B cell (primary cell): ENCODE measurements at regions of chrX and their contacts with region 1.

Region 1: DNA sequence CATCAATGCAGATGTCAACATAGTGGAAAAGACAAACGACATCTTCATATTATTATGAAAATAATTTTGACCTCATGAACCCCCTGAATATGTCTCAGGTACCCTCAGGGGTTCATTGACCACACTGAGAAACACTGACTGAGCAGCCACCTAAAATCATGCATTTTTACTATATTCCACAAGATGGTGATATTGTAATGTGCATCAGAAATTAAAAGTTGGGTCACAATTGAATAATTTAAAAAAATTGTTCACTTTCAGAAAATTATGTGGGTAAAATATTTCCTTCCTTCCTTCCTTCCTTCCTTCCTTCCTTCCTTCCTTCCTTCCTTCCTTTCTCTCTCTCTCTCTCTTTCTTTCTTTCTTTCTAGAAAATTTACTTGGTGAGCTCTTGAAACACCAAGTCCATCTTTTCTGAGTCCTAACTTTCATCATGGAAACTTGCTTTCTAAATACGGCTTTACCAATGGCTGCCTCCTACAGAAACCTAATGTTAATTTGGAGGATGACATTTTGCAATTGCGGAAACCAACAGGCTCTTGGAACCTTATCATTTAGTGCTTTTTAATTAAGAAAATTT is 103.6 kb downstream of the RTL3 start:
- DNase-seq: peak; percentile 44
- ATAC-seq: no peak
- H3K4me3 ChIP-seq: no peak overlapping the region
- H3K4me3 Mint-ChIP-seq: no peak overlapping the region
- H3K27ac ChIP-seq: no peak overlapping the region
- H3K27ac Mint-ChIP-seq: no peak overlapping the region
- H3K4me1 ChIP-seq: no peaks in the 10 kb centered on the region
- H3K4me1 Mint-ChIP-seq: peaks cover 17% of the 10 kb centered on the region
- H3K27me3 ChIP-seq: no peaks in the 10 kb centered on the region
- H3K27me3 Mint-ChIP-seq: no peaks in the 10 kb centered on the region
- CTCF ChIP-seq: peak; percentile 58

Region 2: DNA sequence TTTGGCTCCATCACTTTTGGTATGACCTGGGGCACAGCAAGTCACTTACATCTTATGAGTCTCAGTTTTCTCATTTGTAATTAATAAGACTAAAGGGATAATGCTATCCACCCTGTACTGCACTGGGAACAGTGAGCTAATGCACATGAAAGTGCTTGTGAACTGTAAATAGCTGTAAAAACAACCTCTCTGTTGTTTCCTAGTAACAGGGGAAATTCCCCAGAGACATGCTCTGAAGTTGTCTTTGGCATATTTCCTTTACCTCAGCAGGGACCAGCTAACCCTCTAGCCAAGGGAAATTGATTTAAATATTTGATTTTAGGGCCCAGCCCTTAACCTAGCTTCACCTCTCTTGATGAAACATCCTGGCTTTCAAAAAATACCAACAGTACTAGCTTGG is 222.0 kb before region 1 on chrX:
- CTCF ChIA-PET with region 1: no interaction called
- POLR2A ChIA-PET with region 1: no interaction called
- intact Hi-C with region 1: loop called (anchors 10 kb)
- DNase-seq: peak; percentile 71
- ATAC-seq: peak; percentile 71
- H3K4me3 ChIP-seq: peak overlapping the region in 1 of 5 experiments; percentile 7
- H3K4me3 Mint-ChIP-seq: peak overlapping the region; percentile 54
- H3K27ac ChIP-seq: peak overlapping the region; percentile 46 to 74
- H3K27ac Mint-ChIP-seq: peak overlapping the region; percentile 87
- H3K4me1 ChIP-seq: peaks cover 56 to 70% of the 10 kb centered on the region in 2 donors
- H3K4me1 Mint-ChIP-seq: peaks cover 66% of the 10 kb centered on the region
- H3K27me3 ChIP-seq: no peaks in the 10 kb centered on the region
- H3K27me3 Mint-ChIP-seq: no peaks in the 10 kb centered on the region
- CTCF ChIP-seq: no peak

Region 3: GRCh38 chrX:78886550-78886949 is 331.1 kb after region 1 on chrX:
- CTCF ChIA-PET with region 1: interaction called, 7 read pairs
- POLR2A ChIA-PET with region 1: no interaction called
- intact Hi-C with region 1: loop called (anchors 2 kb)
- DNase-seq: peak; percentile 36
- ATAC-seq: peak; percentile 72
- H3K4me3 ChIP-seq: no peak overlapping the region
- H3K4me3 Mint-ChIP-seq: no peak overlapping the region
- H3K27ac ChIP-seq: no peak overlapping the region
- H3K27ac Mint-ChIP-seq: no peak overlapping the region
- H3K4me1 ChIP-seq: no peaks in the 10 kb centered on the region
- H3K4me1 Mint-ChIP-seq: peaks cover 11% of the 10 kb centered on the region
- H3K27me3 ChIP-seq: no peaks in the 10 kb centered on the region
- H3K27me3 Mint-ChIP-seq: no peaks in the 10 kb centered on the region
- CTCF ChIP-seq: peak; percentile 49

Region 4: GRCh38 chrX:79081895-79082512 is 526.5 kb after region 1 on chrX:
- CTCF ChIA-PET with region 1: interaction called, 24 read pairs
- POLR2A ChIA-PET with region 1: no interaction called
- intact Hi-C with region 1: loop called (anchors 1 kb)
- DNase-seq: peak; percentile 69
- ATAC-seq: peak; percentile 78
- H3K4me3 ChIP-seq: peak overlapping the region in 2 of 5 experiments; percentile 12 to 26
- H3K4me3 Mint-ChIP-seq: peak overlapping the region; percentile 55
- H3K27ac ChIP-seq: peak overlapping the region in 1 of 2 donors; percentile 32
- H3K27ac Mint-ChIP-seq: peak overlapping the region; percentile 51
- H3K4me1 ChIP-seq: peaks cover 4 to 9% of the 10 kb centered on the region in 2 donors
- H3K4me1 Mint-ChIP-seq: peaks cover 10% of the 10 kb centered on the region
- H3K27me3 ChIP-seq: no peaks in the 10 kb centered on the region
- H3K27me3 Mint-ChIP-seq: no peaks in the 10 kb centered on the region
- CTCF ChIP-seq: peak; percentile 70

Region 5: GRCh38 chrX:79270401-79270800 is 714.9 kb after region 1 on chrX:
- CTCF ChIA-PET with region 1: interaction called, 23 read pairs
- POLR2A ChIA-PET with region 1: no interaction called
- intact Hi-C with region 1: loop called (anchors 1 kb)
- DNase-seq: peak; percentile 77
- ATAC-seq: peak; percentile 91
- H3K4me3 ChIP-seq: no peak overlapping the region
- H3K4me3 Mint-ChIP-seq: no peak overlapping the region
- H3K27ac ChIP-seq: peak overlapping the region; percentile 16 to 42
- H3K27ac Mint-ChIP-seq: peak overlapping the region; percentile 54
- H3K4me1 ChIP-seq: peaks cover 20 to 26% of the 10 kb centered on the region in 2 donors
- H3K4me1 Mint-ChIP-seq: peaks cover 44% of the 10 kb centered on the region
- H3K27me3 ChIP-seq: no peaks in the 10 kb centered on the region
- H3K27me3 Mint-ChIP-seq: no peaks in the 10 kb centered on the region
- CTCF ChIP-seq: peak; percentile 77

Region 6: GRCh38 chrX:79412972-79413371 is 857.5 kb after region 1 on chrX:
- CTCF ChIA-PET with region 1: interaction called, 16 read pairs
- POLR2A ChIA-PET with region 1: no interaction called
- intact Hi-C with region 1: loop called (anchors 2 kb)
- DNase-seq: peak; percentile 24
- ATAC-seq: no peak
- H3K4me3 ChIP-seq: no peak overlapping the region
- H3K4me3 Mint-ChIP-seq: no peak overlapping the region
- H3K27ac ChIP-seq: no peak overlapping the region
- H3K27ac Mint-ChIP-seq: no peak overlapping the region
- H3K4me1 ChIP-seq: no peaks in the 10 kb centered on the region
- H3K4me1 Mint-ChIP-seq: peaks cover under 1% of the 10 kb centered on the region
- H3K27me3 ChIP-seq: no peaks in the 10 kb centered on the region
- H3K27me3 Mint-ChIP-seq: no peaks in the 10 kb centered on the region
- CTCF ChIP-seq: peak; percentile 47

Region 7: GRCh38 chrX:79452881-79453280 is 897.4 kb after region 1 on chrX:
- CTCF ChIA-PET with region 1: interaction called, 8 read pairs
- POLR2A ChIA-PET with region 1: no interaction called
- intact Hi-C with region 1: loop called (anchors 2 kb)
- DNase-seq: no peak
- ATAC-seq: no peak
- H3K4me3 ChIP-seq: no peak overlapping the region
- H3K4me3 Mint-ChIP-seq: no peak overlapping the region
- H3K27ac ChIP-seq: no peak overlapping the region
- H3K27ac Mint-ChIP-seq: no peak overlapping the region
- H3K4me1 ChIP-seq: no peaks in the 10 kb centered on the region
- H3K4me1 Mint-ChIP-seq: no peaks in the 10 kb centered on the region
- H3K27me3 ChIP-seq: no peaks in the 10 kb centered on the region
- H3K27me3 Mint-ChIP-seq: no peaks in the 10 kb centered on the region
- CTCF ChIP-seq: no peak